ENCODE measurements at regions of chr22 and their contacts with region 1.

Region 1: GRCh38 chr22:46780453-46780852 is 18.0 kb downstream of the TBC1D22A start:
- DNase-seq: no peak
- ATAC-seq: no peak
- H3K4me3 ChIP-seq: no peak overlapping the region
- H3K27ac ChIP-seq: no peak overlapping the region
- H3K4me1 ChIP-seq: peaks cover 30% of the 10 kb centered on the region
- H3K27me3 ChIP-seq: no peaks in the 10 kb centered on the region
- CTCF ChIP-seq: no peak

Region 2: DNA sequence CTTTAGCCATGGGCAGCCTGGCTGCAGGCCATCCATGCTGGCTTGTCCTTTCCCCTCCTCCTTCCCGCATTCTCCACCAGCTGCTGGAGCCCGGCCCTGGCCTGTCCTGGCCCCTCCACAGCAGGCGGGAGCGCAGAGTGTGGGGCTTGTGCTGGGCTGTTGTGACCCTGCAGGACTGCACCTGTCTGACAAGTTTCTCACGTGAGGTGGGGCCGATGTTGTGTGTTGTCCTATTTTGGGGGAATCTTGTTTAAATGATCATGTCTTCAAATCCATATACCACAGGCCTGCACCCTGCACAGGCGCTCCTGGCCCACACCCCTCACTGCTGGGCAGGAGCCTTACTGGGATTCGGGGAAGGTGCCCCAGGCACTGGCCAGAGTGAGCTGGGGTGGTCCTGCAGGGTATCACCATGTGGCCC is 12.4 kb after region 1 on chr22:
- CTCF ChIA-PET with region 1: no interaction called
- POLR2A ChIA-PET with region 1: interaction called, 11 read pairs
- in situ Hi-C with region 1: no loop called
- intact Hi-C with region 1: no loop called
- DNase-seq: no peak
- ATAC-seq: no peak
- H3K4me3 ChIP-seq: no peak overlapping the region
- H3K27ac ChIP-seq: no peak overlapping the region
- H3K4me1 ChIP-seq: no peaks in the 10 kb centered on the region
- H3K27me3 ChIP-seq: no peaks in the 10 kb centered on the region
- CTCF ChIP-seq: no peak

Region 3: GRCh38 chr22:47148956-47149728 is 368.7 kb after region 1 on chr22:
- CTCF ChIA-PET with region 1: no interaction called
- POLR2A ChIA-PET with region 1: interaction called, 11 read pairs
- in situ Hi-C with region 1: no loop called
- intact Hi-C with region 1: no loop called
- DNase-seq: no peak
- ATAC-seq: no peak
- H3K4me3 ChIP-seq: no peak overlapping the region
- H3K27ac ChIP-seq: no peak overlapping the region
- H3K4me1 ChIP-seq: peaks cover 3% of the 10 kb centered on the region; the same call in 1 of the 2 replicates
- H3K27me3 ChIP-seq: no peaks in the 10 kb centered on the region
- CTCF ChIP-seq: no peak